ENCODE measurements at regions of chr18 and their contacts with region 1.

Region 1: DNA sequence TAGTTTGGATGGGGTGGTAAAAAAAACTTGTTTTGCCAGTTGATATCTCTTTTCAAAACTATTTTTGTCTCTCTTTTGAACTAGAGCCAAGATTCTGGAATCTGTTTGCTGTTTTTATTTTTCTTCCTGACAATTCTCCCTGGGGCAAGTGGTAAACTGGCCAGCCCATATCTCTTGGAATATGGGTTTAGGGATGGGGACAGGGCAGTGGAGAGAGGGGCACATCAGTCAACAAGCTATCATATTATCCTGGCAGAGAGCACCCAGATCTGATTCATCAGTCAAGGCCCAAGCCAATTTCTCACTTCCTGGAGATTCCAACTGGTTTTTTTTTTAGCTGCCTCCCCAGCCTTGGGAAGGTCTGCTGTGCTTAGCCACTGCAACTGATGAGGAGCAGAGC is 52.3 kb downstream of the ARHGAP28 start:
- DNase-seq: no peak
- H3K4me3 ChIP-seq: no peak overlapping the region
- H3K4me3 Mint-ChIP-seq: peak overlapping the region; percentile 10
- H3K27ac Mint-ChIP-seq: peak overlapping the region; percentile 83
- H3K4me1 ChIP-seq: peaks cover 68% of the 10 kb centered on the region
- H3K4me1 Mint-ChIP-seq: peaks cover 54% of the 10 kb centered on the region
- H3K27me3 ChIP-seq: no peaks in the 10 kb centered on the region
- H3K27me3 Mint-ChIP-seq: no peaks in the 10 kb centered on the region
- CTCF ChIP-seq: no peak

Region 2: GRCh38 chr18:6683112-6683876 is 98.5 kb before region 1 on chr18:
- CTCF ChIA-PET with region 1: no interaction called
- POLR2A ChIA-PET with region 1: no interaction called
- intact Hi-C with region 1: loop called (anchors 10 kb)
- DNase-seq: peak; percentile 85 to 91
- H3K4me3 ChIP-seq: no peak overlapping the region; the same call in 1 of the 2 replicates
- H3K4me3 Mint-ChIP-seq: peak overlapping the region; percentile 78
- H3K27ac Mint-ChIP-seq: peak overlapping the region; percentile 86
- H3K4me1 ChIP-seq: peaks cover 25% of the 10 kb centered on the region
- H3K4me1 Mint-ChIP-seq: peaks cover 11% of the 10 kb centered on the region
- H3K27me3 ChIP-seq: no peaks in the 10 kb centered on the region
- H3K27me3 Mint-ChIP-seq: no peaks in the 10 kb centered on the region
- CTCF ChIP-seq: no peak

Measured in Caco-2 (cell line).